T-cell (primary cell): ENCODE measurements at regions of chr7 and their contacts with region 1.

Region 1: GRCh38 chr7:108059526-108059925 is 56.6 kb upstream of the LAMB1 start:
- DNase-seq: no peak
- ATAC-seq: no peak
- H3K4me3 ChIP-seq: no peak overlapping the region
- H3K4me3 Mint-ChIP-seq: no peak overlapping the region
- H3K27ac ChIP-seq: no peak overlapping the region
- H3K27ac Mint-ChIP-seq: no peak overlapping the region
- H3K4me1 ChIP-seq: no peaks in the 10 kb centered on the region
- H3K4me1 Mint-ChIP-seq: no peaks in the 10 kb centered on the region
- H3K27me3 ChIP-seq: peaks cover 0 to 2% of the 10 kb centered on the region in 2 experiments
- H3K27me3 Mint-ChIP-seq: peaks cover 3 to 14% of the 10 kb centered on the region in 2 donors

Region 2: DNA sequence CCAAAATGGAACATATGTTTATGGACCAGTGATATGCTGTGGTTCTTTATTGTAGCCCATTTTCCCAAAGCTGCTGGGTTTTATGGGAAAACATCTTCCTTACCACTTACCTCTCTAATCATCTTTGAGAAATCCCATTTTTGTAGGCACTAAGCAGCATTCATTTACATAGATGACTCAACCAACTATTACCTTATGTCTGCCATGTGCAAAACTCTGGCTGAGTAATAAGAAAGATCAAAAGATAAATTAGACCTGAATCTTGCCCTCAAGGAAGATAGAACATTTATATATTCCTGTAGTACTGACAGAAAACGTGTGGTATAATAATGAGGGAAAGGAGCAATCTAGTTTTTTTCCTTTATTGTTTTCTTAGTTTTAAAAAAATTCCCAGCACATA is 291.3 kb before region 1 on chr7:
- CTCF ChIA-PET with region 1: no interaction called
- POLR2A ChIA-PET with region 1: no interaction called
- DNase-seq: no peak
- ATAC-seq: no peak
- H3K4me3 ChIP-seq: no peak overlapping the region
- H3K4me3 Mint-ChIP-seq: no peak overlapping the region
- H3K27ac ChIP-seq: no peak overlapping the region
- H3K27ac Mint-ChIP-seq: no peak overlapping the region
- H3K4me1 ChIP-seq: no peaks in the 10 kb centered on the region
- H3K4me1 Mint-ChIP-seq: peaks cover 14 to 30% (median 26%) of the 10 kb centered on the region in 3 donors
- H3K27me3 ChIP-seq: no peaks in the 10 kb centered on the region
- H3K27me3 Mint-ChIP-seq: no peaks in the 10 kb centered on the region

Region 3: DNA sequence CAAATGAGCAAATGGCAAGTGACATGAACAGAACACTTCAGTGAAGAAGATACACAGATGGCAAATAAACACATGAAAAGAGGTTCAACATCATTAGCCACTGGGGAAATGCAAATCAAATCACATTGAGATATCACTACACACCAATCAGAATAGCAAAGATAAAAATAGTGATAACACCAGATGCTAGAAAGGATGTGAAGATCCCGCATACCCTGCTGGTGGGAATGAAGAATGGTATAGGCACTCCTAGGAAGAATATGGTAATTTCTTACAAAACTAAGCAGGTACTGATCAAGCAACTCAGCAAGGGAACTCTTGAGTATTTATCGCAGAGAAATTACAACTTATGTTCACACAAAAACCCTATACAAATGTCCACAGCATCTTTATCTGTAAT is 59.4 kb after region 1 on chr7:
- CTCF ChIA-PET with region 1: no interaction called
- POLR2A ChIA-PET with region 1: no interaction called
- DNase-seq: no peak
- ATAC-seq: no peak
- H3K4me3 ChIP-seq: no peak overlapping the region
- H3K4me3 Mint-ChIP-seq: no peak overlapping the region
- H3K27ac ChIP-seq: no peak overlapping the region
- H3K27ac Mint-ChIP-seq: no peak overlapping the region
- H3K4me1 ChIP-seq: no peaks in the 10 kb centered on the region
- H3K4me1 Mint-ChIP-seq: no peaks in the 10 kb centered on the region
- H3K27me3 ChIP-seq: peaks cover 0 to 4% of the 10 kb centered on the region in 2 experiments
- H3K27me3 Mint-ChIP-seq: no peaks in the 10 kb centered on the region

Region 4: DNA sequence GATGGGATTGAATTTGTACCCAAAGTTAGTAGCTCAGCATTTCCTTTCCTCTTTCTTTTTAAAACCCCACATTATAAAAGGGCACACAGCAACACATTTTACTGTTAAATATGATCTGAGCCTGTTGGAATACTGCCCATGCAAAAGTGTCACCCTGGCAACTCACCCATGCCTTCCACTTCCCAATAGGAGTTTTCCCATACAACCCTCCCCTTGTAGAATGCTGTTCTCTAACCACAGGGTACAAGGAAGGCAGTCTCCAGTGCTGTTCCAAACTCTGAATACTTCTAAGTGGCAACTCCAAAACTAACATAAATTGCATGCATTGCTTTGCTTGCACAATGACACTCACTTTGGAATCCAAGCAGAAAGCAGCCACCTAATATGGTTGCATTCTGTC is 335.9 kb after region 1 on chr7:
- CTCF ChIA-PET with region 1: no interaction called
- POLR2A ChIA-PET with region 1: interaction called in 1 of 2 experiments, 12 read pairs
- DNase-seq: no peak
- ATAC-seq: no peak
- H3K4me3 ChIP-seq: no peak overlapping the region
- H3K4me3 Mint-ChIP-seq: no peak overlapping the region
- H3K27ac ChIP-seq: no peak overlapping the region
- H3K27ac Mint-ChIP-seq: no peak overlapping the region
- H3K4me1 ChIP-seq: no peaks in the 10 kb centered on the region
- H3K4me1 Mint-ChIP-seq: no peaks in the 10 kb centered on the region
- H3K27me3 ChIP-seq: peaks cover 0 to 8% of the 10 kb centered on the region in 2 experiments
- H3K27me3 Mint-ChIP-seq: peaks cover 7 to 9% of the 10 kb centered on the region in 2 donors

Region 5: DNA sequence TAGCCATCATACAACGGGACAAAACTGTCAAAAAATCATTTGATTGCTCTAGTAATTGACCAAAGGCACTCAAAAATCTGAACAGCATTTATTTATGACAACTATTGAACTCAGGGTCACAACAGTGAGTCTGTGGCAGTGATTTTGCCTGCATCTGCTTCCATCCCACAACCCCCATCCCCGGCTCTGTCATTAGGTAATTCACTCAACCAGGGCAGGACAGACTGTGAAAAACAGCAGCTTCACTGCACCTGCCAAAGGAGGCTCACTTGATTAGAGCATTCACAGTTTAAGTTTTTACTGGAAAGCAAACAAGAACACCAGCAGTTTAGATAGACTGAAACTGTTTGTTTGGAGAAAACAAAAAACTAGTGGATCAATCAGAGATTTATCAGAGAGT is 374.5 kb after region 1 on chr7:
- CTCF ChIA-PET with region 1: no interaction called
- POLR2A ChIA-PET with region 1: no interaction called
- DNase-seq: no peak
- ATAC-seq: no peak
- H3K4me3 ChIP-seq: no peak overlapping the region
- H3K4me3 Mint-ChIP-seq: no peak overlapping the region
- H3K27ac ChIP-seq: no peak overlapping the region
- H3K27ac Mint-ChIP-seq: no peak overlapping the region
- H3K4me1 ChIP-seq: no peaks in the 10 kb centered on the region
- H3K4me1 Mint-ChIP-seq: peaks cover 0 to 6% (median 0%) of the 10 kb centered on the region in 3 donors
- H3K27me3 ChIP-seq: peaks cover 0 to 6% of the 10 kb centered on the region in 2 experiments
- H3K27me3 Mint-ChIP-seq: peaks cover 27 to 43% of the 10 kb centered on the region in 2 donors